Activated naive CD4-positive, alpha-beta T cell treated with anti-CD3 and anti-CD28 coated beads for 36 hours (primary cell): ENCODE measurements at regions of chr6 and their contacts with region 1.

Region 1: GRCh38 chr6:9057937-9058336 is 622.6 kb upstream of the SLC35B3 start:
- DNase-seq: no peak
- H3K4me3 Mint-ChIP-seq: no peak overlapping the region
- H3K27ac Mint-ChIP-seq: no peak overlapping the region
- H3K4me1 Mint-ChIP-seq: no peaks in the 10 kb centered on the region
- H3K27me3 Mint-ChIP-seq: no peaks in the 10 kb centered on the region

Region 2: DNA sequence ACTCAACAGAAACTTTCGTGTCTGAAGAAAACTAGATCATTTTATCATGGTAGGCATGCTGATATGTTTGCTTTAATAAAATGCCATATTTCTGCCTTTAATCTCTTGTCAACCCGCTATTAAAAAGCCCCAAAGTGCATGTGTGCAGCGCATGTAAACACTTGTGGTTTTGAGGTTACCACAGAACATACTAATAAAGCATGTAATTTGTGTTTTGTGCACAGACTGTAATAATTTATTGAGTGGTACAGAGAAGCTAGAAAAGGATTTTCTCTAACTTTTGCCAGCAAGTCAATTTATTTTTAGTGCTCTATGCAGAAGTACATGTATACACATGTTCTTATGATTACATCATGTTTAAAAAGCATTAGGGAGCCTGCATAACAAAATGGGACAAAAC is 272.7 kb before region 1 on chr6:
- CTCF ChIA-PET with region 1: no interaction called
- intact Hi-C with region 1: no loop called
- DNase-seq: no peak
- H3K4me3 Mint-ChIP-seq: no peak overlapping the region
- H3K27ac Mint-ChIP-seq: no peak overlapping the region
- H3K4me1 Mint-ChIP-seq: no peaks in the 10 kb centered on the region
- H3K27me3 Mint-ChIP-seq: no peaks in the 10 kb centered on the region

Region 3: DNA sequence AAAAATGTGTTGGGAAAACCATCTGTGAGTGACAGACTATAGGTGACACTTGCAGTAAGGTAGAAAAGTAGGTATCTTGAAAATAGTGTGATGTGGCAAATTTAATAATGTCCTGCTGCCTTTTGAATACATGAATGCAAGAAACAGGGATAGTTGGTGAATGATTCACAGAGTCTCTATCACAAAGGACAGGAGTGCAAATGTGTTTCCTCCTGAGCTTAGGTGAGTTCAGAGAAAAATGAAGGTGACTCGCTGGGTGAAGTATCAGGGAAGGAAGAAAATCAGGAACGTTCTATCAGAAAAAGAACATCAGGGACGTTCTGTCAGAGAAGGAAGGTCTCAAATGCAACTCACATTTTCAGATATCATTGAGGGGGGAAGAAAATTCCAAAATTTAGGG is 64.8 kb before region 1 on chr6:
- CTCF ChIA-PET with region 1: no interaction called
- intact Hi-C with region 1: no loop called
- DNase-seq: no peak
- H3K4me3 Mint-ChIP-seq: no peak overlapping the region
- H3K27ac Mint-ChIP-seq: no peak overlapping the region
- H3K4me1 Mint-ChIP-seq: no peaks in the 10 kb centered on the region
- H3K27me3 Mint-ChIP-seq: peaks cover 14% of the 10 kb centered on the region

Region 4: DNA sequence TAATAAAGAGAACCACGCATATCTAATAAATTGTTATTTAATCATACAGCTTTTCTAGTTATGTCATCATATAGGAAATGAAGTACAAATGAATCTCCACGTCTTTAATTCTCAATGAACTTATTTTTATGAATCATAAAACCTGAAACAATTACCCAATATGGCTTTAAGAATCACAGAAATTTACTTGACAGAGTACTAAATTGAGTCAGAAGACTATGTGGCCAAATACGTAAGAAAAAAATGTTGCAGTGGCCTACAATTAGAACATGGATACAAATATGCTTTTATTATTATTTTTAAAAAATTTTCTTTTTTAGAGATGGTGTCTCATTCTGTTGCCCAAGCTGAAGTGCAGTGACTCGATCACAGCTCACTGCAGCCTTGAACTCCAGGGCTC is 37.9 kb before region 1 on chr6:
- CTCF ChIA-PET with region 1: no interaction called
- intact Hi-C with region 1: loop called (anchors 1 kb)
- DNase-seq: no peak
- H3K4me3 Mint-ChIP-seq: no peak overlapping the region
- H3K27ac Mint-ChIP-seq: no peak overlapping the region
- H3K4me1 Mint-ChIP-seq: no peaks in the 10 kb centered on the region
- H3K27me3 Mint-ChIP-seq: no peaks in the 10 kb centered on the region

Region 5: DNA sequence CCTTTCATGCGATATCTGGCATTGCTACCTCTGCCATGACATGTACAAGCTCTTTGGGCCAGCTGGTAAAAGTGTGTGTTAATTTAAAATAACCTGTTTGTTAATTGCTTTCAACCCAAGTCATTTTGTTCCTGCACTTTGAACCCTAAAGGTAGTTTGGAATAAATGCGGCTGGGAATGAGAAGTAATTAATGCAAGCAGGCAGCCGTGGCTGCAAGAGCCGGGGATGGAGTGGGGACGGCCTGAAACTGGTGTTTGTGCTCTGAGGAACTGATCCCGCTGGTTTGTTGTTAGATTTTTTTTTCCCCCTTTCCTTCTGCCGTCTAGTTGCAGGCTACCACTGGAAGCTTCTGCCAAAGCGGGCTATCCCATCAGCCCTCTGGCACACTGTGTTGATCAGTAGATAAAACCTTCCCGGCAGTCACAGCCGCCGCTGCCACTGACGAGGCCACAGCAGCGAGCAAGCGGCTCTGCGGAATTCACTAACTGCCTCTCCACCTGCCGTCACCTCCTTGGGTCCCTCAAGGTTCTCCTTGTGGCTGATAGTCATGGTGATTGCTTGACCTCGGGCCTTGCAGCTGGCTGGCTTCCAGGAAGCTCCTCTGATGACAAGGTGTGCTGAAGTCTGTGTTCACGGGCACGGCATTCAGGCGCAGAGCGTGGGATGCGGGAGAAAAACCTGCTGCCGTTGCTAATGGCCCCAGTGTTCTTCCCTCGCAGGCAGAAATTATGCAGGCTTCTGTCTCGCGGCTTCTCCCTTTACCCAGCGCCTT is 1041.0 kb after region 1 on chr6:
- CTCF ChIA-PET with region 1: no interaction called
- intact Hi-C with region 1: no loop called
- DNase-seq: no peak
- H3K4me3 Mint-ChIP-seq: no peak overlapping the region
- H3K27ac Mint-ChIP-seq: no peak overlapping the region
- H3K4me1 Mint-ChIP-seq: no peaks in the 10 kb centered on the region
- H3K27me3 Mint-ChIP-seq: peaks cover 4% of the 10 kb centered on the region